ENCODE measurements at regions of chr11 and their contacts with region 1.

Region 1: DNA sequence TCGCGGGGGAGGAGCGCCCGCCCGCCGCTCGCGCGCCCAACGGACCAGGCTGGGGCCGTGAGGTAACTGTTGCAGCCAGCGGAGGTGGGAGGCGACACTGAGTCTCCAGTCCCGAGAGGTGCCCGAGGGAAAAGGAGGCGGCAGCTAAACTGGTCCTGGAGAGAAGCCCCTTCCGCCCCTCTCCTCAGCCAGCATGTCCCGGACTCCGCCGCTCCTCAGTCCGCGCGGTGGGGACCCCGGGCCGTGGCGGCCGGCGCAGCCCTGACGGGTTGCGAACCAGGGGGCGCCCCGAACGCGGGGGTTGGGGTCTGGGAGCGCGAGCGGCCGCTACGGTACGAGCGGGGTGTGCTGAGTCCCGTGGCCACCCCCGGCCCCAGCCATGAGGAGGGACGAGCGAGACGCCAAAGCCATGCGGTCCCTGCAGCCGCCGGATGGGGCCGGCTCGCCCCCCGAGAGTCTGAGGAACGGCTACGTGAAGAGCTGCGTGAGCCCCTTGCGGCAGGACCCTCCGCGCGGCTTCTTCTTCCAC is at the start of gene PDE3B:
- DNase-seq: peak; percentile 69
- H3K4me3 Mint-ChIP-seq: peak within 1 kb of the TSS; percentile 91
- H3K27ac Mint-ChIP-seq: peak within 1 kb of the TSS; percentile 92
- H3K4me1 Mint-ChIP-seq: peaks cover 52% of the 10 kb centered on the region
- H3K27me3 Mint-ChIP-seq: no peaks in the 10 kb centered on the region
- total RNA-seq, gene PDE3B: 62.8 and 64.0 TPM in 2 replicates

Region 2: DNA sequence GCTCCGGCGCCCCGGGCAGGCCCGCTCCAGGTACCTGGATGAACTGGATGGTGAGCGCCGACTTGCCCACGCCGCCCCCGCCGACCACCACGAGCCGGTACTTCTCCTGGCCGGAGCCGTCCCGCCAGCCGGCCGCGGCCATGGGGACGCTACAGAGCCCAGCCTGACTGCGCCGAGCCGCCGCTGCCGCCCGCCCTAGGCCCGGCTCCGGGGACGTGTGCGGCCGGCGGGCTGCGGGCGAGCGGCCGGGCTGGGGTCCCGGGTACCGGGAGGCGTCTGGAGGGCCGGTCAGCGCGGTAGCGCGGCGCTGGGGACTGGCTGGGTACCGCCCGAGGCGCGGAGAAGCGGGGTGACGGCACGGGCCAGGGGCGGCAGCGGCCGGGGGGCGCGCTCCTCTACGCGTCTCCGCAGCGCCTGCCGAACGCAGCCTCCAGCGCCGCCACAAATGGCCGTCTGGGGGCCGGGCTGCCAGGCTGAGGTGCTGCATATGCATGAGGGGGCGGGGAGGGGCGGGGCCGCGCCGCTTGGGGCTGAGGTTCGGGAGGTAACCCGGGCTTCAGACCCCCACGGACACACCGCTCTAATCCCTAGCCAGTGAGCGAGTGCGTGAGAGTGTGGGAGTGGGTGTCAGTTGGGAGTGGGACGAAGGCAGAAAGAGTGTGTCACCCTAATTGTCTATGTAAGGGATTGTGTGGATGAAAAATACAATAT is 284.9 kb before region 1 on chr11 and contains the start of gene RRAS2:
- intact Hi-C with region 1: loop called (anchors 10 kb)
- DNase-seq: peak; percentile 72
- H3K4me3 Mint-ChIP-seq: peak within 1 kb of the TSS; percentile 99
- H3K27ac Mint-ChIP-seq: peak within 1 kb of the TSS; percentile 94
- H3K4me1 Mint-ChIP-seq: peaks cover 63% of the 10 kb centered on the region
- H3K27me3 Mint-ChIP-seq: peaks cover 2% of the 10 kb centered on the region
- total RNA-seq, gene RRAS2: 82.4 and 84.1 TPM in 2 replicates

Region 3: DNA sequence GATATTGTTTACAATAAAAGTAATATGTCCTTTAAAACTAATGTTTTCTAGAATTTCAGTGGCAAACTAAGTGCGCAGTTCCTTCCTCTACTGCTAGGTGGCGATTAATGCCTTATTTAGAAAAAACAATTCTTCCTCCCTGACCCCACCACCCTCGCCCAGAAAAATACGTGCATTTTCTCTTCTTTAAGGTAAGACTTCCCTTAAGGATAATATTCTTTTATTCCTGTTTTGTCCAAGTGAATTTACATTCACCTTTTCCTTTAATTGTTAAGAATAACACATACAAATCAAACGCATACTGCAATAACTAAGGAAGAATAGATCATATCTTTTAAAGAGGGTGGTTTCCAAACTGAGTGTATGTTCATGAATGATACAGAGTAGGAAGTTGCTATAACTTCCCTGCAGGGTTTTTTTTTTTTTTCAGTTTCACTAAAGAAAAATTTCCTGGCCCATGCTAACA is 106.6 kb before region 1 on chr11:
- intact Hi-C with region 1: loop called (anchors 1 kb)
- DNase-seq: peak; percentile 12
- H3K4me3 Mint-ChIP-seq: peak overlapping the region; percentile 74
- H3K27ac Mint-ChIP-seq: peak overlapping the region; percentile 89
- H3K4me1 Mint-ChIP-seq: peaks cover 48% of the 10 kb centered on the region
- H3K27me3 Mint-ChIP-seq: no peaks in the 10 kb centered on the region

Region 4: DNA sequence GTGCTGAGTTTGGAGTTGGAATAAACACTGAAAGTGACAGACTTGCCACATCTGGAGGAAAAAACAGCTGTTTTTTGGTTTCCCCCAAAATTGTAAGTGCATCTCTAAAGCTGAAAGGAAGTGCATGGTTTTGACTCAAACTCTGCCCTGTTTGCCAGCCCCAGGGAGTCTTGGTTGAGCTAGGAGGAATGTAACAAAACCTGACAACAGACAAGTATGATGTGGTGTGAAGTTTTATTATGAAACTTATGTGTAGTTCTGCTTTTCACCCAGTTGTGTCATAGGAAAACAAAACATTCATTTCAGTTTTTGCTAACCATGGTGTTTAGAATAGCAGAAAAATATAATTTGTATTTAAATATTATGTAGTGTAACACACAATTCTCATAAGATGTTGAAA is 31.8 kb before region 1 on chr11:
- intact Hi-C with region 1: loop called (anchors 1 kb)
- DNase-seq: no peak
- H3K4me3 Mint-ChIP-seq: peak overlapping the region; percentile 15
- H3K27ac Mint-ChIP-seq: peak overlapping the region; percentile 57
- H3K4me1 Mint-ChIP-seq: peaks cover 41% of the 10 kb centered on the region
- H3K27me3 Mint-ChIP-seq: no peaks in the 10 kb centered on the region

Region 5: DNA sequence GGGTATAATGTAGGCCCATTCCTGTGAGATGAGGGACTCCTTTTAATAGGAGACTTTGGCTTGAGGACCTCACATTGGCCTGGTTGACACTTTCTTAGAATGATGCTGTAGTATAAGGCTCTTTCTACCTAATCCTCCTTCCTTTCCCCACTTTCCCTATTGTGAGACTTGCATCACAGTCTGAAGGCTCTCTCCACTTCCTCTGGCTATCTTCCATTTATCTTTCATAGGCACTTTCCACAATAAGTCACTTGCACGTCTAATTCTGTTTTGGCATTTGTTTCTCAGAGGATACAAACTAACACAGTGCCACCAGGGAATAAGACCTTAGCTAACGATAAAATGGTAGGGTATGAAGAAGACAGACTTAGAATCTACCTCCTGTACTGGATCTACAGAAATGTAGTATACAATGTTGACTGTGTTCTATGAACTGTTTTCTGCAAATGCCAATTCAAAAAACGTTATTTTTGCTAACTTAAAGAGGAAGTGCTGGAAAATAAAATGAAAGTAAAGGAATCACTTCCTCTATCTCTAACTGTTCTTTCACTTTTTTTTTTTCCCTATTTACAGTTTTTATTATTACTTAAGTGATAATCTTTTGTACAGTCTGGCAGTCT is 18.1 kb before region 1 on chr11:
- intact Hi-C with region 1: no loop called
- DNase-seq: no peak
- H3K4me3 Mint-ChIP-seq: peak overlapping the region; percentile 31
- H3K27ac Mint-ChIP-seq: peak overlapping the region; percentile 63
- H3K4me1 Mint-ChIP-seq: peaks cover 65% of the 10 kb centered on the region
- H3K27me3 Mint-ChIP-seq: no peaks in the 10 kb centered on the region

Region 6: GRCh38 chr11:14751975-14752407 is 108.2 kb after region 1 on chr11:
- intact Hi-C with region 1: no loop called
- DNase-seq: no peak
- H3K4me3 Mint-ChIP-seq: no peak overlapping the region
- H3K27ac Mint-ChIP-seq: peak overlapping the region; percentile 36
- H3K4me1 Mint-ChIP-seq: peaks cover 44% of the 10 kb centered on the region
- H3K27me3 Mint-ChIP-seq: no peaks in the 10 kb centered on the region

Region 7: GRCh38 chr11:14764579-14765527 is 121.1 kb after region 1 on chr11:
- intact Hi-C with region 1: loop called (anchors 1 kb)
- DNase-seq: peak; percentile 60
- H3K4me3 Mint-ChIP-seq: no peak overlapping the region
- H3K27ac Mint-ChIP-seq: no peak overlapping the region
- H3K4me1 Mint-ChIP-seq: peaks cover 41% of the 10 kb centered on the region
- H3K27me3 Mint-ChIP-seq: no peaks in the 10 kb centered on the region

Region 8: DNA sequence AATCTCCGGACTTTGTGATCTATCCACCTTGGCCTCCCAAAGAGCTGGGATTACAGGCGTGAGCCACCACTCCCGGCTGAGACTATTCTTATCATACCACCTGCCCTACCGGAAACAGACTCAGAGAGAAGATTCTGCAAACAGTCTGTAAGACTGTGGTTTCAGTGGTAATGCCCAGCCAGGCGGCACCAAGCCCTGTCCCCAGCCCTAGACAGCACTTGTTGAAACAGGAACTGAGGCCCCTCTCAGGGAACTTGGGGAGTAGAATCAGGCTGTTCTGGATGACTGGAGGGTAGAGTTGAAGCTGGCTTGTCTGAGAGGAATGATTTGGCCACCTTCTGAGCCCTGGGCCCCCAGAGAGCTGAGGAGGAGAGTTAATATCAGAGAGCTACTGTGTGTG is 469.6 kb after region 1 on chr11:
- intact Hi-C with region 1: loop called (anchors 5 kb)
- DNase-seq: no peak
- H3K4me3 Mint-ChIP-seq: peak overlapping the region; percentile 48
- H3K27ac Mint-ChIP-seq: peak overlapping the region; percentile 15
- H3K4me1 Mint-ChIP-seq: peaks cover 49% of the 10 kb centered on the region
- H3K27me3 Mint-ChIP-seq: peaks cover 10% of the 10 kb centered on the region

Measured in activated T-helper 1 cell treated with anti-CD3 and anti-CD28 coated beads, Interleukin-12 subunit alpha, Interleukin-12 subunit beta, Interleukin-2, Interleukin-4 antibody, amounts not matched to agents 30 ng/mL and 10 ng/mL and 1 ng/mL, durations not matched to agents 14 hours and 24 hours and 36 hours (primary cell).